Right lobe of liver (tissue), 6 donors: ENCODE measurements at regions of chr16 and their contacts with region 1.

Region 1: DNA sequence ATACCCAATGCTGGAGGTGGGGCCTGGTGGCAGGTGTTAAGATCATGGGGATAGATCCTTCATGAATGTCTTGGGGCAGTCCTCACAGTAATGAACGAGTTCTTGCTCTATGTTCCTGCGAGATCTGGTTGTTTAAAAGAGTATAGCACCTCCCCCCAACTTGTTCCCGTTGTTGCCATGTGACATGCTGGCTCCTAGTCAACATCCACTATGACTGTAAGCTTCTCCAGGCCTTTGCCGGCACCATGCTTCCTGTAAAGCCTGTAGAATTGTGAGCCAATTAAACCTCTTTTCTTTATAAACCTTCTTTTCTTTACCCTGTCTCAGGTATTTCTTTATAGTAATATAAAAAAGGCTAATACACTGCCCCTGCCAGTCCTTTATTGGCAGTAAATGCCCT is 33.3 kb downstream of the RANBP10 start:
- DNase-seq: peak; percentile 55 to 74 (median 65)
- ATAC-seq: peak; percentile 39 to 59 (median 50)
- H3K4me3 ChIP-seq: no peak overlapping the region
- H3K27ac ChIP-seq: peak overlapping the region; percentile 76 to 93 (median 77)
- H3K4me1 ChIP-seq: peaks cover 0 to 64% (median 36%) of the 10 kb centered on the region in 4 donors
- H3K27me3 ChIP-seq: no peaks in the 10 kb centered on the region
- CTCF ChIP-seq: no peak
- POLR2A ChIP-seq: no peak

Region 2: DNA sequence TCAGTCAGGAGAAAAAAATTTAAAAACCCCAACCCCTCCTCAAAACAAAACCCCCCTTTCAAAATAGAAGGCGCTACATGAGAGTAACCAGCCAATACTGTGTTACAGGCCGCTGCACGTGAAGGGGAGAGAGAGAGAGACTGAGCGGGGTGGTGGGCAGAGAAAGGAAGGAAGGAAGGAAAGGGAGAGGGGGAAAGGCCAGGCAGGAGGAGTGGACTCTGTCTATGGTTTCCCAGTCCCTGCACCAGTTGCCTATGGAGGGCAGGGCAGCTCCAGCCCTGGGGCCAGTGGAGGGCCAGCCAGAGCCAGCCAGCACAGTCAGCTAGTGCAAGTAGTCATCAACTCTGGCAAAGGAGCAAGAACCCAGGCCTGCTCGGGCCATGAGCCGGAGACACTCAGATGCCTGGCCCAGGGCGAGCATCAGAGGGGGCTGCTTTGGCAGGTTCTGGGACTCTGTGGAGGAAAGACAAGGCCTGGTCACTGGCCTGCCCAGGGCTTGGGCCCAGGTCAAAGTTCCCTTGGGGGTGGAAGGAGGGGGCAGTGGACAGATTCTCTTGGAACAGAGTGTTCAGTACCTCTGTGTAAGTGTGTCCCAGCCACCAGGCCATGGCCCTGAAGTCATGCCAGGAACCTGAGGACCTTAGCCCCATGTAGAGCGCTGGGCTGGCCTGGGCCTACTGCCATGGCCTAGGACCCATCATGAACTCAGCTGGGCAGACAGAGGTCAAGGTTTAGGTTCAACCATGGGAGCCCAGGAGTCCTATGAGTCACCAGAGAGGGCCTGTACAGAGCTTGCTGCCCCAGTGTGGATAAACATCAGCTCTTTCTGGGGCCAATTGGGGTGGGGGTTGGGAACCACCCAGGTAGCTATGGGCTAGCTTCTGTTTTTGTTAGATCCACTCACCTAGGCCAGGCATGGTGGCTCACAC is 46.7 kb before region 1 on chr16:
- intact Hi-C with region 1: loop called in 1 of 2 experiments (anchors 5 kb)
- DNase-seq: peak; percentile 92 to 98 (median 95)
- ATAC-seq: peak; percentile 85 to 93 (median 90)
- H3K4me3 ChIP-seq: no peak overlapping the region
- H3K27ac ChIP-seq: peak overlapping the region; percentile 70 to 92 (median 89)
- H3K4me1 ChIP-seq: peaks cover 0 to 31% (median 12%) of the 10 kb centered on the region in 4 donors
- H3K27me3 ChIP-seq: no peaks in the 10 kb centered on the region
- CTCF ChIP-seq: peak in 1 of 4 donors; percentile 10
- POLR2A ChIP-seq: peak; percentile 45